ENCODE measurements at regions of chr5 and their contacts with region 1.

Region 1: GRCh38 chr5:133111299-133111698 is 59.5 kb downstream of the HSPA4 start:
- DNase-seq: peak; percentile 86 to 96
- H3K4me3 ChIP-seq: no peak overlapping the region
- H3K27ac ChIP-seq: no peak overlapping the region
- H3K4me1 ChIP-seq: peaks cover 0 to 12% (median 4%) of the 10 kb centered on the region in 4 donors
- H3K27me3 ChIP-seq: no peaks in the 10 kb centered on the region
- CTCF ChIP-seq: peak in 5 of 7 experiments; percentile 73 to 87 (median 86)
- EP300 ChIP-seq: no peak
- POLR2A ChIP-seq: no peak

Region 2: GRCh38 chr5:133287500-133287899 is 176.2 kb after region 1 on chr5:
- intact Hi-C with region 1: loop called (anchors 5 kb)
- DNase-seq: peak; percentile 55 to 61
- H3K4me3 ChIP-seq: no peak overlapping the region
- H3K27ac ChIP-seq: no peak overlapping the region
- H3K4me1 ChIP-seq: peaks cover 0 to 6% (median 2%) of the 10 kb centered on the region in 4 donors
- H3K27me3 ChIP-seq: no peaks in the 10 kb centered on the region
- CTCF ChIP-seq: peak in 5 of 7 experiments; percentile 28 to 62 (median 34)
- EP300 ChIP-seq: no peak
- POLR2A ChIP-seq: no peak

Region 3: GRCh38 chr5:133523013-133523658 is 411.8 kb after region 1 on chr5:
- intact Hi-C with region 1: no loop called
- DNase-seq: no peak
- H3K4me3 ChIP-seq: no peak overlapping the region
- H3K27ac ChIP-seq: no peak overlapping the region
- H3K4me1 ChIP-seq: no peaks in the 10 kb centered on the region
- H3K27me3 ChIP-seq: peaks cover 0 to 18% (median 0%) of the 10 kb centered on the region in 3 donors
- CTCF ChIP-seq: no peak
- EP300 ChIP-seq: no peak
- POLR2A ChIP-seq: no peak